GM18951 (cell line): ENCODE measurements at regions of chr14 and their contacts with region 1.

Region 1: GRCh38 chr14:71320107-71320733 is 413.0 kb downstream of the PCNX1 start:
- POLR2A ChIP-seq: peak; percentile 93

Region 2: DNA sequence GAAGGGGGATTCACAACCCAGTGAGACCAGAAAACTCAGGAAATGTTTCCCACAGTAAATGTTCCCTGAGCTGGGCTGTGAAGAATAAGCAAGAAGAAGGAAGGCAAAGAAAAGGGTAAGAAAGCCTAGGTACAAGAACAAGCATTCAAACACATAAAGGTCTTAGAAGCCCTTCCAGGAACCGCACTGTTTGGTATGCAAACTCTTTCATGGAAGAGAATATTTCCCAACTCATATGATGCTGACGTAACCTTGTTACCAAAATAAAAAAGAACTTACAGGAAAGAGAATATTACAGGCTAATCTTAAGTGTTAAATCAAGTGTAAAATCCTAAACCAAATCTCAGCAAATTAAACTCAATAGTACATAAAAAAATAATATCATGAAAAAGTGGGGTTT is 743.3 kb before region 1 on chr14:
- in situ Hi-C with region 1: no loop called
- POLR2A ChIP-seq: no peak

Region 3: DNA sequence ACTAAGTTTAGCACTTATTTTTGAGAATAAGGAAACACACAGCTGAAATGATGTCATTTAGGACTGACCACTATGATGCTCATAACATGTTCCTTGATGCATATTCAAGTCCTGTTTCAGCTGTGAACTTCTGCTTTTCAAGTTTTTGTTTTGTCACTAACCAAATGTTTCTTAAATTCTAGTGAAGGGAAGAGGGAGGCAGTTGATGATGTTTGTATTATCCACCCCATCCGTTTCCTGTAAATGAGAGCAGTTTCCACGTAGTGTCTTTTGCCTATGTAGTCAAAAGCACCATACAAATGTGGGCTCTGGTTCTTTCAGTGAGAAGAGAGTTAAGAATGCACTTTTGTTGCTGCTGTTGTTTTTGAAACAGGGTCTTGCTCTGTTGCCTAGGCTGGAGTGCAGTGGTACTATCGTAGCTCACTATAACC is 78.9 kb after region 1 on chr14:
- in situ Hi-C with region 1: loop called (anchors 10 kb)
- POLR2A ChIP-seq: no peak

Region 4: GRCh38 chr14:71739273-71739937 is 419.2 kb after region 1 on chr14:
- in situ Hi-C with region 1: loop called (anchors 10 kb)
- POLR2A ChIP-seq: no peak